Mammary epithelial cell (primary cell): ENCODE measurements at regions of chr1 and their contacts with region 1.

Region 1: GRCh38 chr1:22204941-22205913 is 62.3 kb upstream of the WNT4 start:
- DNase-seq: no peak
- H3K4me3 ChIP-seq: no peak overlapping the region
- H3K27ac ChIP-seq: no peak overlapping the region
- H3K4me1 ChIP-seq: no peaks in the 10 kb centered on the region
- H3K27me3 ChIP-seq: peaks cover 9% of the 10 kb centered on the region
- CTCF ChIP-seq: no peak

Region 2: GRCh38 chr1:22168412-22168973 is 36.7 kb before region 1 on chr1:
- CTCF ChIA-PET with region 1: no interaction called
- dilution Hi-C with region 1: loop called (anchors 5 kb)
- in situ Hi-C with region 1: no loop called
- intact Hi-C with region 1: no loop called
- DNase-seq: no peak
- H3K4me3 ChIP-seq: no peak overlapping the region
- H3K27ac ChIP-seq: no peak overlapping the region
- H3K4me1 ChIP-seq: peaks cover 6% of the 10 kb centered on the region
- H3K27me3 ChIP-seq: peaks cover 2% of the 10 kb centered on the region
- CTCF ChIP-seq: no peak